WTC11 (cell line): ENCODE measurements at regions of chr11 and their contacts with region 1.

Region 1: DNA sequence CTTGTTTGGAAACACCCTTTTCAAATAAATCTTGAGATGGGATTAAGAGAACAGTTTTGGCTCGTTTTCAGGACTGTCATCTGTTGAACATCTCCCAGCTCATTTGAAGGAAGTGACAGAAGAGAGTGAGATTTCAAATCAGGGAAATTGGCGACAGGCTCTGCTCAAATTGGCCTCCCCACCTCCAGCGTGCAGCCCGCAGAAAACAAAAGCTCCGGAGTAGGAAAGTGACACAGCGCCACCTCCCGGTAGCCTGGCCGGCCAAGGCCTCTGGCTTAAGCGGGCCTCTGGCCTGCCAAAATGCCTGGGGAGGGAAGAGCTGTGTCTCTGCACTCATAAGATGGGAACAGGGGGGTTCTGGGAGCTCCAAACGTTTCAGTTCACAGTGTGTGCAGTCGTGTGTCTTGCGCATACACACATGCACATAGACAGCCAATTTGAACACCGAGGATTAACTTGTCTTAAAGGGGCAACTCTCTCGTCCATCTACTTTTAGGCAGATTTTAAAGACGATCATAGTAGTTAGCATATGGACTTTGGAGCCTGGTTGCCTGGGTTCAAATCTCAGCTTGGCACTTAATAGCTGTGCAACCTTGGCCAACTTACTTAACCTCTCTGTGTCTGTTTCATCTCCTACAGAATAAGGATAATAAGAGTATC is 132.7 kb upstream of the RCN1 start:
- DNase-seq: peak; percentile 90
- ATAC-seq: peak; percentile 90
- H3K4me3 Mint-ChIP-seq: no peak overlapping the region
- H3K27ac Mint-ChIP-seq: no peak overlapping the region
- H3K4me1 Mint-ChIP-seq: peaks cover 6% of the 10 kb centered on the region
- H3K27me3 Mint-ChIP-seq: peaks cover 12% of the 10 kb centered on the region
- CTCF ChIP-seq: peak; percentile 90

Region 2: DNA sequence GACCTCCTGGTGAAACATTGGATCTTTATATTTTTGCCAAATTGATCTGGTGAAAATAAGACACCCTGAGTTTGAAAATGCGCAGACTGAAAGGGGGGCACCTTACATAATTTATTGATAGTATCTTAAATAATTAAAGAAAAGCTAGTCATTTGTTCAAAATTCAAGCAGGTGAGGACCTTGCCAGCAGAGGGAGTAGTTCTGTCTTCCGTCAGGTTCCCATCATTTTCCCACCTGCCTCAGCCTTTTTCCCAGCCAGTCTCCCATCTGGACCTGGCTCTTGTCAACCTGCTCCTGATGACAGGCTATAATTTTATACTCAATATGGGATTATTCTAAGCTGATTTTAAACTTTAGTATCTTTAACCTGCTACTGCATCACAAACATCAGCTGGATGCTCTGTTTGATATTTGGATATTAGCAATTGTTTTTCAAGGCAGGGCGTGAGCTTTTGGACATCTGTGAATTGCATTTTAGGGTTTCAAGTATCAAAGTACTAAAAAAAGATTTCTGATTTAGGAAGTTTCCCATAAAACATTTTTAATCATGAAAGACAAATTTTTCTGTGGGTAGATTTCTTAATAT is 316.6 kb before region 1 on chr11:
- CTCF ChIA-PET with region 1: interaction called, 47 read pairs
- POLR2A ChIA-PET with region 1: no interaction called
- DNase-seq: peak; percentile 65
- ATAC-seq: 0 out of 2 replicates have a peak, but pooled peaks have one; percentile 38
- H3K4me3 Mint-ChIP-seq: no peak overlapping the region
- H3K27ac Mint-ChIP-seq: no peak overlapping the region
- H3K4me1 Mint-ChIP-seq: no peaks in the 10 kb centered on the region
- H3K27me3 Mint-ChIP-seq: no peaks in the 10 kb centered on the region
- CTCF ChIP-seq: peak; percentile 59

Region 3: GRCh38 chr11:31834237-31834636 is 124.0 kb before region 1 on chr11:
- CTCF ChIA-PET with region 1: interaction called, 12 read pairs
- POLR2A ChIA-PET with region 1: no interaction called
- DNase-seq: peak; percentile 17
- ATAC-seq: peak; percentile 82
- H3K4me3 Mint-ChIP-seq: no peak overlapping the region
- H3K27ac Mint-ChIP-seq: no peak overlapping the region
- H3K4me1 Mint-ChIP-seq: peaks cover 7% of the 10 kb centered on the region
- H3K27me3 Mint-ChIP-seq: peaks cover 23% of the 10 kb centered on the region
- CTCF ChIP-seq: 0 out of 2 replicates have a peak, but pooled peaks have one; percentile 20

Region 4: DNA sequence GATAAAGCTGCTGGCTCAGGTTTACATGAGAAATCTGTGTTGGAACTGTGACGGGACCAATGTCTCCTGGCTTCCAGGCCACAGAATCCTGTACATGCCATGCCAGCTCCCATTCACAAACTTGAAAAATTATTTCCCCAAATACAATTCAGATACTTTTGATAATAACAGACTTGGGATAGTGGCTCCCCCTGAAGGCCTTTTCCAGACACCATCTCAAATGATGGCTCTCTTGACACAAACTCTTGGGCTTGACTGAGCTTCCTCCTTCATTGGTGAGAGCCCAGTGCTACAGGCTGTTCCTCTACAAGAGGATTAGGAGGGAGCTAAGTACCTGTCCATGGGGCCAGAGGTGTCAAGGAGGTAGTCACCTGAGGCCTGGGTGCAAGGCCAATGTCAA is 42.3 kb before region 1 on chr11:
- CTCF ChIA-PET with region 1: interaction called, 14 read pairs
- POLR2A ChIA-PET with region 1: no interaction called
- DNase-seq: no peak
- ATAC-seq: no peak
- H3K4me3 Mint-ChIP-seq: no peak overlapping the region
- H3K27ac Mint-ChIP-seq: no peak overlapping the region
- H3K4me1 Mint-ChIP-seq: no peaks in the 10 kb centered on the region
- H3K27me3 Mint-ChIP-seq: peaks cover 4% of the 10 kb centered on the region; the same call in 1 of the 2 replicates
- CTCF ChIP-seq: no peak

Region 5: GRCh38 chr11:31968461-31969358 is 10.5 kb after region 1 on chr11:
- CTCF ChIA-PET with region 1: interaction called, 24 read pairs
- POLR2A ChIA-PET with region 1: no interaction called
- DNase-seq: no peak
- ATAC-seq: no peak
- H3K4me3 Mint-ChIP-seq: no peak overlapping the region
- H3K27ac Mint-ChIP-seq: no peak overlapping the region
- H3K4me1 Mint-ChIP-seq: no peaks in the 10 kb centered on the region
- H3K27me3 Mint-ChIP-seq: peaks cover 4% of the 10 kb centered on the region; the same call in 1 of the 2 replicates
- CTCF ChIP-seq: no peak

Region 6: DNA sequence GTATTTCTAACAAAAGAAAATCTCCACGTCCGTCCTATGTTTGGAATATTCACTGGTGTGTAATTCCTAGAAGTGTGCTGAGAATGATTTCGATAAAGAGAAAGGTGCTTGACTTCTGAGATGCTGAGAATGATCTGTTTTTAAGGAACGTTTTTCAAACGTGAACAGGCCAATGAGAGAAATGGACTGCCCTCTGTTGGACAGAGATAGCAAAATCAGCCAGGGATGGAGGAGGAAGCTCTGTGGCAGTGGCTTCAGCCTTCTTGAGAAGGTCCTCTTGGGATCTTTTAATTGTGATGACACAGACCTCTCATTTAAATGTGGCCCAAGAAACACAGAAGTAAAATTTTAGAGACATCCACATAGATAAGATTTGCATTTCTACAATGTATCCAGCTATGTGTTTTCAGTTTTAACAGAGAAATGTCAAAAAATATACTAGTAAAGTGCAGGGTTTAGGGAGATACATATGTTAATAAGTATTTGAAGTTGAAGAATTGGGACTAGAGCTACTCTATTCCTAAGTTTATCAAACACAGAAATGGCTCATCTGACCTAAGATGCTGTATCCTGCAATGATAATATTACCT is 48.7 kb after region 1 on chr11:
- CTCF ChIA-PET with region 1: interaction called, 20 read pairs
- POLR2A ChIA-PET with region 1: no interaction called
- DNase-seq: peak; percentile 18
- ATAC-seq: peak; percentile 72
- H3K4me3 Mint-ChIP-seq: no peak overlapping the region
- H3K27ac Mint-ChIP-seq: no peak overlapping the region
- H3K4me1 Mint-ChIP-seq: peaks cover 16% of the 10 kb centered on the region
- H3K27me3 Mint-ChIP-seq: peaks cover under 1% of the 10 kb centered on the region; the same call in 1 of the 2 replicates
- CTCF ChIP-seq: peak; percentile 52